Naive thymus-derived CD4-positive, alpha-beta T cell (primary cell): ENCODE measurements at regions of chr9 and their contacts with region 1.

Region 1: DNA sequence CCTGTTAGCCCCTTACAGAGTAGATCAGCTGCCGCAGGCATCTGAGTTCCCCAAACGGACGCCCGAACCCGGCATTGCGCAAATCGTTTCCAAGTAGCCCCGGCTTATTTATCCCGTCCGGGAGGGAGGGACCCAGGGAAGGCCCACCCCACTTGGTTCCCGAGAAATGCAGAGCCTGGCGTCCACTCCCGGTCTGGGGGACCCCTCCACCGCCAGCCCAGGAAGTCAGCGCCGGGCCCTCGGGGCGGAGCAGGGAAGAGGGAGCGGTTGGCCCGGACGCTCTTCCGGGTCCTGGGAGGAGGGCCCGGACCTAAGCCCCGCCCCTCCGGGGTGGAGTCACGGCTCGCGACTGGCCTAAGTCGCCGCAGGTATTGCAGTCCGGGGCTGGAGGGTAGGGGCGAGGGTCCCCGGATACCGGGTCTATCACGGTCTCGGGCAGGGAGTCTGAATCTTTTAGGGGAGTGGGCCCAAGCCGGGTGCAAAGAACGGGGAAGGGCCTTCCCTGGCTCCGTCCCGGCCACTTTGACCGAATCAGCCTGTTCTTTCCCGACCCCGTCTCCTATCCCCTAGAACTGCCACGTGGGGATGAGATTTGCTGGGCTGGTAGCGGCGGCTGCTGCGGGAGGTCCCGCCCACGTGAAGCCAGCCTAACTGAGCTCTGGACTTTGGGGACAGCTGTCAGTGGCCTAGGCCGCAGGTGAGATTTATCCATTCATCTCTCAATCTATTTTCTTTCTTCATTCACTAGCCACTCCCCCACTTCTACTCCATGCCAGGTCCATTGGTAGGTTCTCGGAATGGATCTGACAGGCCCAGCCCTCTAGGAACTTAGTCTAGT is at the start of gene RABEPK:
- DNase-seq: peak; percentile 76 to 97 (median 83)
- ATAC-seq: peak; percentile 99
- H3K4me3 ChIP-seq: peak within 1 kb of the TSS; percentile 90
- H3K4me3 Mint-ChIP-seq: peak within 1 kb of the TSS; percentile 80 to 96 (median 93)
- H3K27ac ChIP-seq: peak within 1 kb of the TSS; percentile 89
- H3K27ac Mint-ChIP-seq: peak within 1 kb of the TSS; percentile 80 to 96 (median 92)
- H3K4me1 ChIP-seq: peaks cover 20 to 34% of the 10 kb centered on the region in 2 donors
- H3K4me1 Mint-ChIP-seq: peaks cover 24 to 74% (median 56%) of the 10 kb centered on the region in 7 donors
- H3K27me3 ChIP-seq: no peaks in the 10 kb centered on the region
- H3K27me3 Mint-ChIP-seq: peaks cover 0 to 10% (median 0%) of the 10 kb centered on the region in 5 donors
- total RNA-seq, gene RABEPK: 10.7 to 19.5 (median 15.1) TPM

Region 2: GRCh38 chr9:125126019-125126746 is 74.2 kb before region 1 on chr9:
- CTCF ChIA-PET with region 1: interaction called, 5 read pairs
- POLR2A ChIA-PET with region 1: interaction called, 5 read pairs
- intact Hi-C with region 1: loop called in 1 of 2 experiments (anchors 2 kb)
- DNase-seq: peak; percentile 55 to 93 (median 88)
- ATAC-seq: peak; percentile 100
- H3K4me3 ChIP-seq: no peak overlapping the region
- H3K4me3 Mint-ChIP-seq: peak overlapping the region; percentile 67 to 87 (median 82)
- H3K27ac ChIP-seq: peak overlapping the region; percentile 27
- H3K27ac Mint-ChIP-seq: peak overlapping the region; percentile 84 to 98 (median 96)
- H3K4me1 ChIP-seq: peaks cover 18 to 36% of the 10 kb centered on the region in 2 donors
- H3K4me1 Mint-ChIP-seq: peaks cover 29 to 57% (median 38%) of the 10 kb centered on the region in 7 donors
- H3K27me3 ChIP-seq: no peaks in the 10 kb centered on the region
- H3K27me3 Mint-ChIP-seq: no peaks in the 10 kb centered on the region

Region 3: DNA sequence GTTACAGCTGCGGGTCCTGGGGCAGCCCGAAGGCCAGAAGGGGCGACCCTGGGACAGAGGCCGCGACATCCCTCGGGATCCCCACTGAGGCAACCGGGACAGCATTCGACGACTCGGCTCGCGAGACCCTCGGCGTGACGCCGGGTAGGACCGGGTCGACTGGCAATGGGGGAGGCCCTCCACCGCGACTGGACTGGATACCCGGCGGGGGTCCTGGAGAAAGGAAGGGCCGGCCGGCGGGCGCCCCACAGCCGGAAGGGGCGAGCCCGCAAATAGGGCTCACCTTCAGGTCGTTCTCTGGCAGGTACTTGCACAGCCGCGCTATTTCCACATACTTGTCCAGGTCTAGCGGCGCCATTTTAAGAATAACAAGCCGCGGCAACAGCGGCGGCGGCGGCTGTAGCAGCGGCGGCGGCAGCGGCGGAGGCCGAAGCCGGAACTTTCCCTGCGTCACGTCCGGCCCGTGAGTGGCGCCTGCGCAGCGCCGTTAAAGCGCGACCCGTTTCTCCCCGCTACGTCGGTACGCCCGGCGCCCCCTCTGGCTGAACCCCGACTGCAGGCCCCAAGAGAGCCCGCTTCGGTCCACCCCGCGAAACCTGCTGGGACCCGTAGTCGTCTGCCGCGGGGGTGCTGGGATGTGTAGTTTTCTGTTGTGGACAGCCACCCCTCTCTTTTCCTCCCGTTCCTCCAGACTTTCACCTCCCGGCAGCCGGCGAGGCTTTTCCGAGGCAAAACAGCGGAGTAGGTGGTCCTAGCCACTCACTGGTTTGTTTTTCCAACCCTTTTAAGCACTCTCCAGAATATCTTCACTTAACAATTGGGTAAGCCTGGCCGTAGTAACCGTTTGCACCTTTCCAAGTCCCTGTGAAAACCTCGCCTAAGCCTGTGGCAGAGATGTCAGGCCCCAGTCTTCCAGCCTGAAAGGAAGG is 10.8 kb before region 1 on chr9 and contains the start of gene PPP6C:
- CTCF ChIA-PET with region 1: no interaction called
- POLR2A ChIA-PET with region 1: interaction called, 32 read pairs
- intact Hi-C with region 1: loop called (anchors 1 kb)
- DNase-seq: peak; percentile 92 to 97 (median 96)
- ATAC-seq: peak; percentile 98
- H3K4me3 ChIP-seq: peak within 1 kb of the TSS; percentile 99
- H3K4me3 Mint-ChIP-seq: peak within 1 kb of the TSS; percentile 89 to 99 (median 96)
- H3K27ac ChIP-seq: peak within 1 kb of the TSS; percentile 98
- H3K27ac Mint-ChIP-seq: peak within 1 kb of the TSS; percentile 90 to 97 (median 95)
- H3K4me1 ChIP-seq: peaks cover 35 to 51% of the 10 kb centered on the region in 2 donors
- H3K4me1 Mint-ChIP-seq: peaks cover 35 to 79% (median 57%) of the 10 kb centered on the region in 7 donors
- H3K27me3 ChIP-seq: no peaks in the 10 kb centered on the region
- H3K27me3 Mint-ChIP-seq: peaks cover 0 to 4% (median 0%) of the 10 kb centered on the region in 5 donors
- total RNA-seq, gene PPP6C: 32.9 to 54.2 (median 49.5) TPM

Region 4: DNA sequence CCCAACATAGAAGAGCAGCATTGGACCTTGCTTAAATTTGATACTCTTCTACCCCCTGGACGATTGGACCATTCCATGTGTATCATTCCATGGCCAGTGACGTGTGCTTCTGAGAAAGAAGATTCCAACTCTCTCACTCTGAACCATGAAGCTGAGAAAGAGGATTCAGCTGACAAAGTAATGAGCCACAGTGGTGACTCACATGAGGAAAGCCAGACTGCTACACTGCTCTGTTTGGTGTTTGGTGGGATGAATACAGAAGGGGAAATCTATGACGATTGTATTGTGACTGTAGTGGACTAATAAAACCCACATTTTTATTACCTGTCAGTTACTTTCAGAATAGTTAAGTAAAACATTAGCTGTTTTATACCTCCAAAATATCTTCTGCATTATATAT is 33.2 kb after region 1 on chr9:
- CTCF ChIA-PET with region 1: no interaction called
- POLR2A ChIA-PET with region 1: interaction called, 37 read pairs
- intact Hi-C with region 1: no loop called
- DNase-seq: no peak
- ATAC-seq: peak; percentile 12
- H3K4me3 ChIP-seq: no peak overlapping the region
- H3K4me3 Mint-ChIP-seq: no peak overlapping the region
- H3K27ac ChIP-seq: no peak overlapping the region
- H3K27ac Mint-ChIP-seq: peak overlapping the region in 3 of 9 donors; percentile 7 to 43 (median 14)
- H3K4me1 ChIP-seq: peaks cover 25 to 31% of the 10 kb centered on the region in 2 donors
- H3K4me1 Mint-ChIP-seq: peaks cover 24 to 40% (median 37%) of the 10 kb centered on the region in 7 donors
- H3K27me3 ChIP-seq: no peaks in the 10 kb centered on the region
- H3K27me3 Mint-ChIP-seq: no peaks in the 10 kb centered on the region

Region 5: DNA sequence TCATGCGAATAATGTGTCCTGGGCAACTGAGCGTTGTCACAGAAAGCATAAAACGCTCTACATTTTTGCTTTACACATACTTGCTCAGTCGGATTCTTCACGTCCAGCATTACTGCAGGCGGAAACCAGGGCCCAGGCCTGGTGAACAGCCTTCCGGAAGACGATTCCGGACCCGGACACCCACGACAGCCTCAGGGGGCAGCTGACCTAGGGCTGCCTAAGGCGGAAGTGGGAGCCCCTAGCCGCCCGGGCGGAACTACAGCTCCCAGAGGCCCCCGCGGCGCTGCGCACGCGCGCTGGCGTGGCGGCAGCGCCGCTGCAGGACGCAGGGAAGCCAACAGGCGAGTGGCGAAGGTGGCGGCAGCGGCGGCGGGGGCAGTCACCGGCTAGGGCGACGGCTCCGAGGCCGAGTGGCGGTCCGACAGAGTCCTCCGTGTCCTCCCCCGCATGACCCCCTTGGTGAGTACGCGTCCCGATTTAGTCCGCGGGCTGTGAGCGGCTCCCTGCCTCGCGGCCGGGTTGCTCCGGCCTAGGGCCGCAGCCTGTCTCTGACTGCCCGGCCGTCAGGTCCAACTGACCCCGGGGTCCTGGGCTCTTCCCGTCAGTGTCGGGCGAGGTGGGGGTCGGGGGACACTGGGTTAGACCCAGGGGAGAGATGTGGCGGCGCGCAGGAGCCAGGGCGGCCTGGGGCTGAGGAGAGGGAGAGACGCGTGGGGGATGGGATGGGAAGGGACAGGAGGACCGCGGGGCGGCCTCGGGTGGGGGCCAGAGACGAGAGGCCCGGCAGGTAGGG is 61.3 kb after region 1 on chr9 and contains the start of gene GAPVD1:
- CTCF ChIA-PET with region 1: no interaction called
- POLR2A ChIA-PET with region 1: interaction called, 15 read pairs
- intact Hi-C with region 1: loop called (anchors 1 to 2 kb)
- DNase-seq: peak; percentile 83 to 95 (median 89)
- ATAC-seq: peak; percentile 97
- H3K4me3 ChIP-seq: peak within 1 kb of the TSS; percentile 97
- H3K4me3 Mint-ChIP-seq: peak within 1 kb of the TSS; percentile 82 to 99 (median 98)
- H3K27ac ChIP-seq: peak within 1 kb of the TSS; percentile 94
- H3K27ac Mint-ChIP-seq: peak within 1 kb of the TSS; percentile 83 to 99 (median 94)
- H3K4me1 ChIP-seq: peaks cover 8 to 24% of the 10 kb centered on the region in 2 donors
- H3K4me1 Mint-ChIP-seq: peaks cover 21 to 48% (median 42%) of the 10 kb centered on the region in 7 donors
- H3K27me3 ChIP-seq: no peaks in the 10 kb centered on the region
- H3K27me3 Mint-ChIP-seq: no peaks in the 10 kb centered on the region
- total RNA-seq, gene GAPVD1: 57.3 to 68.9 (median 65.0) TPM

Region 6: DNA sequence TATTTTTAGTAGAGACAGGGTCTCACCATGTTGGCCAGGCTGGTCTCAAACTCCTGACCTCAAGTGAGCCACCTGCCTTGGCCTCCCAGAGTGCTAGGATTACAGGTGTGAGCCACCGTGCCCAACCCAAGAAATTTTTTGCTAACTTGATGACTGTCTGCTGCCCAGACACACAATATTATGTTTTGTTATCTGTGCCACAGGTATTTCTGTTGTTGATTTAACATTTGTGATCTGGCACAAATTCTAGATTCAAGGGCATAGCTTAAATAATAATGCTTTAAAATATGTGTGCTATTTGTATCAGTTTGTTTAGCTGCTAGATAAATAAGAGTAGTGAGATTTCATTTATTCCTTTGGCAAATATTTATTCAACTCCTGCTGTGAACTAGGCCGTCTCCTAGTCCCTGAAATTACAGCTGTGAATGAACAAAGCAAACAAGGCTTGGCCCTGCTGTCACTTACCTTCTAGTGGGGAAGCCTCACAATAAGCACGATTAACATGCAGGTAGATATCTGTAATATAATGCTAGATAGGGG is 96.5 kb after region 1 on chr9:
- CTCF ChIA-PET with region 1: no interaction called
- POLR2A ChIA-PET with region 1: no interaction called
- intact Hi-C with region 1: no loop called
- DNase-seq: no peak
- ATAC-seq: no peak
- H3K4me3 ChIP-seq: no peak overlapping the region
- H3K4me3 Mint-ChIP-seq: no peak overlapping the region
- H3K27ac ChIP-seq: no peak overlapping the region
- H3K27ac Mint-ChIP-seq: peak overlapping the region in 7 of 9 donors; percentile 10 to 72 (median 36)
- H3K4me1 ChIP-seq: no peaks in the 10 kb centered on the region
- H3K4me1 Mint-ChIP-seq: peaks cover 4 to 22% (median 9%) of the 10 kb centered on the region in 7 donors
- H3K27me3 ChIP-seq: no peaks in the 10 kb centered on the region
- H3K27me3 Mint-ChIP-seq: no peaks in the 10 kb centered on the region